ENCODE measurements at regions of chr1 and their contacts with region 1.

Region 1: GRCh38 chr1:204323887-204324286 is 35.8 kb downstream of the PLEKHA6 start:
- DNase-seq: peak; percentile 81
- H3K4me3 Mint-ChIP-seq: no peak overlapping the region
- H3K27ac Mint-ChIP-seq: peak overlapping the region; percentile 2
- H3K4me1 Mint-ChIP-seq: peaks cover 54% of the 10 kb centered on the region
- H3K27me3 Mint-ChIP-seq: no peaks in the 10 kb centered on the region
- CTCF ChIP-seq: no peak

Region 2: GRCh38 chr1:203861379-203862184 is 462.3 kb before region 1 on chr1 and contains the start of gene SNRPE:
- CTCF ChIA-PET with region 1: no interaction called
- POLR2A ChIA-PET with region 1: no interaction called
- intact Hi-C with region 1: no loop called
- DNase-seq: peak; percentile 100
- H3K4me3 Mint-ChIP-seq: peak within 1 kb of the TSS; percentile 100
- H3K27ac Mint-ChIP-seq: peak within 1 kb of the TSS; percentile 100
- H3K4me1 Mint-ChIP-seq: peaks cover 43% of the 10 kb centered on the region
- H3K27me3 Mint-ChIP-seq: no peaks in the 10 kb centered on the region
- CTCF ChIP-seq: peak; percentile 100
- total RNA-seq, gene SNRPE: 358 and 423 TPM in 2 replicates

Region 3: GRCh38 chr1:204257954-204258752 is 65.7 kb before region 1 on chr1:
- CTCF ChIA-PET with region 1: interaction called, 10 read pairs
- POLR2A ChIA-PET with region 1: interaction called, 6 read pairs
- intact Hi-C with region 1: no loop called
- DNase-seq: peak; percentile 80
- H3K4me3 Mint-ChIP-seq: no peak overlapping the region
- H3K27ac Mint-ChIP-seq: peak overlapping the region; percentile 49
- H3K4me1 Mint-ChIP-seq: peaks cover 13% of the 10 kb centered on the region
- H3K27me3 Mint-ChIP-seq: no peaks in the 10 kb centered on the region
- CTCF ChIP-seq: peak; percentile 97

Region 4: DNA sequence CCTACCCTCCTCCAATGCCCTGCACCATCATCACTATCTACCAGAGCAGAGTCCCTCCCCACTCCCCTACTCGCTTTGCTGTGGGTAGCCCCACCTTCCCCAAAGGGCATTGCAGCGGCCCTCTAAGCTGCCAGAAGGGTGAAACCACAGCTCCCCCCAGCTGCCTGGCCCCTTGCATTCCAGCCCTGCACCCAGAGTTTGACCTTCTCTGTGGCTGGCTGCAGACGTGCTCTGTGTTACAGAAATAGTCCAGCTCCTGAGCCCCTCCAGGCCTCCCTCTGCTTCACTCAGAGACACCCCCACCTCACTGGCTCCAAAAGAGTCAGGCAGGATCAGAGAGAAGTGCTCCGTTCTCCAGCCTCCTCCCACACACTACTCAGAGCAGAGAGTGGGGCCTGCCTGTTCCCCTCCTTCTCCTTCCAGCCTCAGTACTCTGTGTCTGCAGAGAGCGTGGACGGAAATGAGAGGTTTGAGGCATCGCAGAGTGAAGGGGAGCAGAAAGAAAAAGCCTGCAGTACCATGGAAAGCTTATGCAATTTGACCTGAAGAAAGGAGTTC is 27.4 kb before region 1 on chr1:
- CTCF ChIA-PET with region 1: interaction called, 28 read pairs
- POLR2A ChIA-PET with region 1: interaction called, 413 read pairs
- intact Hi-C with region 1: no loop called
- DNase-seq: peak; percentile 62
- H3K4me3 Mint-ChIP-seq: peak overlapping the region; percentile 40
- H3K27ac Mint-ChIP-seq: peak overlapping the region; percentile 62
- H3K4me1 Mint-ChIP-seq: peaks cover 67% of the 10 kb centered on the region
- H3K27me3 Mint-ChIP-seq: no peaks in the 10 kb centered on the region
- CTCF ChIP-seq: no peak

Region 5: DNA sequence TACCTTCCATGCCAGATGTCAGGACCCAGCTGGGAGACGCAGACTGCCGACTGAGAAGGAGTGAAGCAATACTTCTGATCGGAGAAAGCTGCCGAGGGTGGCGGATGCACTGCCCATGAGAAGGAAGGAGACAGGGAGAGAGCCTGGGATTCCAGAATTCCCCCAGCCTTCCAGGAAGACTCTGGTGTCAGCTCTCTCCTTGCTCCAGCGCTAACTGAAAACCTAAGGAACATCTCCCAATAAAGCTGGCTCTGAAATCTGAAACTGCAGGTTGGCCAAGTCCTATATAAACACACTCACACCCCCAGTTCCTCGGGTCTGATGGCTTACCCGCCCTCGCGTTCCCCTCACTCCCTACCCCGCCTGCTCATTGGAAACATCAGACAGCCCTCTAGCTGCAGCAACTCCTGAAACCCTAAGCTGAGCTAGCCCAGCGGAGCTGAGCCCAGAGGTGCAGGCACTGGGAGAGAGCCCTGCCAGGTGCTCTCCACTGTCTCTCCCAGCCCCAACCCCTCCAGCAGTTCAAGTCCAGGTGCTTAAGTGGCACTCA is 16.5 kb before region 1 on chr1:
- CTCF ChIA-PET with region 1: interaction called, 3 read pairs
- POLR2A ChIA-PET with region 1: interaction called, 413 read pairs
- intact Hi-C with region 1: no loop called
- DNase-seq: no peak
- H3K4me3 Mint-ChIP-seq: no peak overlapping the region
- H3K27ac Mint-ChIP-seq: no peak overlapping the region
- H3K4me1 Mint-ChIP-seq: peaks cover 20% of the 10 kb centered on the region
- H3K27me3 Mint-ChIP-seq: no peaks in the 10 kb centered on the region
- CTCF ChIP-seq: no peak

Region 6: DNA sequence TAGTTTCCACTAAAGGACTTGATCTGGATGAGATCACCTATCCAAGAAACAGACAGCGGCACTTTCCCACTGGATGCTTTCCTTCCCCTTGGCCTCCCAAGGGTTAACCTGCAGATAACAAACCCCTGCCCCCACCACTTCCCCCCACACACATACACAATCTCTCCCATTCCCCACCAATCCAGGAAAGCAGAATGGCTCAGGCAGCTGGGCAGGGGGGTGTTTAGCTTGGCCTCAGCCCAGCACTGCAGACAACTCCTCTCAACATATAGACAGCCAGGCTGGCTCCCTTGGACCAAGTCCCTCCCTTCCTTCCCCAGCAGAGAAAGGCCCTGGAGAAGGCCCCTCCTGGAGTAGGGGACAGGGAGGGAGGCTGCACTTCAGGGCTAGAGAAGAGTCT is 11.2 kb after region 1 on chr1:
- CTCF ChIA-PET with region 1: interaction called, 7 read pairs
- POLR2A ChIA-PET with region 1: interaction called, 26 read pairs
- intact Hi-C with region 1: no loop called
- DNase-seq: no peak
- H3K4me3 Mint-ChIP-seq: no peak overlapping the region
- H3K27ac Mint-ChIP-seq: no peak overlapping the region
- H3K4me1 Mint-ChIP-seq: no peaks in the 10 kb centered on the region
- H3K27me3 Mint-ChIP-seq: no peaks in the 10 kb centered on the region
- CTCF ChIP-seq: no peak

Region 7: DNA sequence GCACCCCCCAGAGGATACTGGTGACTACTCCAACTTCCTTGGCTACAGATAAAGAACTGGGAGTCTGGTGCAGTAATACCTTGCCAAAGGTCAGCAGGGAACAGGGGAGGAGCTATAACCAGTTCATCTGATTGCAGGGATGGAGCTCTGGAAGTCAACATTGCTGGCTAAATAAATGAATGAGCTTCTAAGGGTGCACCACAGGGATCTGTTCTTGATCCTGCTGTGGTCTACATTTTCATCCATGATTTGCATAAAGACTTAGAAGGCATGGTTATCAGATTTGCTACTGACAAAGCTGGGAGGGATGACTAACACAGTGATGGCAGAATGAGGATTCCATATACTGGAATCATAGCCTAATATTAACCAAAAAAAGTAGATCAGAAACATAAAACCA is 17.5 kb after region 1 on chr1:
- CTCF ChIA-PET with region 1: interaction called, 39 read pairs
- POLR2A ChIA-PET with region 1: interaction called, 31 read pairs
- intact Hi-C with region 1: no loop called
- DNase-seq: no peak
- H3K4me3 Mint-ChIP-seq: no peak overlapping the region
- H3K27ac Mint-ChIP-seq: no peak overlapping the region
- H3K4me1 Mint-ChIP-seq: peaks cover 12% of the 10 kb centered on the region
- H3K27me3 Mint-ChIP-seq: no peaks in the 10 kb centered on the region
- CTCF ChIP-seq: no peak